Posterior cingulate gyrus (tissue), 11 donors: ENCODE measurements at regions of chr5 and their contacts with region 1.

Region 1: GRCh38 chr5:93582677-93583438 is at the start of gene NR2F1:
- DNase-seq: peak in 4 of 10 donors; percentile 58 to 87 (median 80)

Region 2: DNA sequence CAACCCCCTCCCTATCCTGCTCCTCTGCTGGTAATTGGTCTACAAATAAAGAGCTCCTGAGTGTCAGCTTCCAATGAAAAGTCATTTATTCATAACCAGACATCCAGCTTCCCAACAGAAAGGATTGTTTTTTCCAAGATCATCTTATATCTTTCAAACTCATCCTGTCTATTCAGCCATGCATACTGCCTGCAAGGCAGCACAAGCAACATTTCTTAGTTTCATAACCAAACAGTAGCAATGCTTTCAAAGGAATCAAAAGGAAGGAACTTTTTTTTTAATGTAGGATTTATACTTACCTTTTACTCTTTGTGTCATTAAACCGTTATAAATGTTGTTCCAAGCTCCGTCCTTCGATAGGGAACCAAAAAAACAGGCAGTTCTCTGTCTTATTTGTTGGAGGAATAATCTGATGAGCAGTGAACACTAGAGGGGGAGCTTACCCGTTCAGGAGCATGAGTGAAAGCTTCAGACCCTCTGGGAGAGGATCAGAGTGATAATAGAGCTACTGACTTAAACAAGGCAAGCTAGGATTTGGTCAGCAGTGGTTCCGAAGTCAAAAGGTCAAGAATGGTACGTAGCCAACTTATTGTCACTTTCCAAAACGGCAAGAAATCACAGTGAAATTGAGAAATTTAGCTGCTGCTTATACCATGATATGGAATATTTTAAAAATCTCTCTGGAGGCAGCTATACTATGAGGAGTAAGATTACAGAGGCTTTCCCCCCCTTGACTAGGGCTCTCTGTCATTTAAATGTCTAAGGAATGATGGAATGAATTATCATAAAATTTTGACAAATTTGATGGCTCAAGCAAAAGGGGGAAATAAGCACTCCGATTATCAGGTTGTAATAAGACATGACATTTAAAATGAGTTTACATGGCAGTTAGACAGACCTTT is 894.8 kb before region 1 on chr5:
- intact Hi-C with region 1: loop called (anchors 10 kb)
- DNase-seq: peak in 1 of 10 donors; percentile 12

Region 3: GRCh38 chr5:93620487-93621326 is 37.8 kb after region 1 on chr5:
- intact Hi-C with region 1: loop called (anchors 2 kb)
- DNase-seq: peak; percentile 57 to 96 (median 78)

Region 4: DNA sequence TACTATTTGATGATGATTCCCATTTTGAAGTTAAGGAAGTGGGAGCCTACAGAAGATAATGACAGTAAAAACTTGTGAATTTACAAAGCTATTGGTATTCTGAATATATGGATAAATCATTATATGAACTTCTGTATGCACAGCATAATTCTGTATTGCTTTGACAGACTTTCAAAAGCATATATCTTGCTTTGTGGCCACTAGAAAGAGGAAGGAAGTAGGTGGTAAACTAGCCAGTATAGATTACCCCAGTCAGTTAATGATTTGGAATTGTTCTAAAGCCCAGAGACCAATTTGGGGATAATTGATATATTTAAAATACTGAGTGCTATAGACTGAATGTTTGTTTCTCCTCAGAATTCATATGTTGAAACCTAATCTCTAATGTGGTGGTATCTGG is 53.1 kb after region 1 on chr5:
- intact Hi-C with region 1: no loop called
- DNase-seq: no peak

Region 5: DNA sequence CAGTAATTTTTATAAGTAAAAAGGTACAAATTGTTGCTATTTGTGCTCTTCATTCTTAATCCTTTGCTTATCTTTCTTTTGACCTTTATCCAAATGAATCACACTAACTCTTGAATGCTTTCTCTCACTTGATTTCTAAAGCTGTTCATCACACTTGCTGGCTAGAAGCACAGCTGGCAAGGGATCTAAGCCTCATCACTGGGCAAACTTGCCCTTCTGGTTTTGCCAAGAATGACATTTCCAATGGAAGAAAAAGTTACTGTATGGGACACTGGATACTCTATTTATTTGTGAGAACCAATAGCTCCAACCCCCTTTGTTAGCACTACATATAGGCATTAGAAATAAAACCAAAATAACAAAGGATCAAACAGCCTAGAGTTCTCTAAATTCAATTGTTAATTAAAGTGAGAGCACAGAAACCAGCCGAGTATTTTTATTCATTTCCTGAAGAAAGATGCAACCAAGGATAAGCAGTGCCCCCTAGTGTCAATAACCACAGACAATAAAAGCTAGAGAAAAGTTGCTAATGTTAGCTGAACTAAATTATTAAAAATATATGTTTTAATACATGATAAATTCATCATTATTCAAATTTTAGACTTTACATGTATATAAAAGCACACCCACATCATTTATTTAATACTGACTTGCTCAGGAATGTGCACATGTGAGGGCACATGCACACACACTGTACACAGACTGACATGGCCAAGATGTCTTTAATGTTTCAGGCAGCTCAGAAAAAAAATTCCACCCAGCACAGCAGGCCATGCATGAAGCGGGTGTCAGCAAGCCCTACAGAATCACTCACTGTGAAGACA is 218.3 kb after region 1 on chr5:
- intact Hi-C with region 1: loop called (anchors 2 kb)
- DNase-seq: peak in 3 of 10 donors; percentile 13 to 63 (median 21)

Region 6: GRCh38 chr5:93915142-93915553 is 332.3 kb after region 1 on chr5:
- intact Hi-C with region 1: loop called (anchors 10 kb)
- DNase-seq: no peak